Panc1 (cell line): ENCODE measurements at regions of chr15 and their contacts with region 1.

Region 1: GRCh38 chr15:74901612-74902082 is 5.0 kb downstream of the FAM219B start:
- DNase-seq: peak; percentile 54
- ATAC-seq: peak; percentile 52
- H3K4me3 ChIP-seq: no peak overlapping the region
- H3K27ac ChIP-seq: no peak overlapping the region
- H3K4me1 ChIP-seq: peaks cover 7% of the 10 kb centered on the region; the same call in 1 of the 2 replicates
- H3K27me3 ChIP-seq: no peaks in the 10 kb centered on the region
- CTCF ChIP-seq: peak; percentile 97

Region 2: GRCh38 chr15:74950078-74951000 is 48.7 kb after region 1 on chr15:
- CTCF ChIA-PET with region 1: interaction called, 12 read pairs
- POLR2A ChIA-PET with region 1: interaction called, 3 read pairs
- in situ Hi-C with region 1: no loop called
- intact Hi-C with region 1: no loop called
- DNase-seq: peak; percentile 89
- ATAC-seq: peak; percentile 84
- H3K4me3 ChIP-seq: no peak overlapping the region
- H3K27ac ChIP-seq: no peak overlapping the region
- H3K4me1 ChIP-seq: peaks cover 25% of the 10 kb centered on the region
- H3K27me3 ChIP-seq: no peaks in the 10 kb centered on the region
- CTCF ChIP-seq: peak; percentile 99